Activated CD4-positive, alpha-beta memory T cell treated with anti-CD3 and anti-CD28 coated beads for 36 hours (primary cell): ENCODE measurements at regions of chr16 and their contacts with region 1.

Region 1: DNA sequence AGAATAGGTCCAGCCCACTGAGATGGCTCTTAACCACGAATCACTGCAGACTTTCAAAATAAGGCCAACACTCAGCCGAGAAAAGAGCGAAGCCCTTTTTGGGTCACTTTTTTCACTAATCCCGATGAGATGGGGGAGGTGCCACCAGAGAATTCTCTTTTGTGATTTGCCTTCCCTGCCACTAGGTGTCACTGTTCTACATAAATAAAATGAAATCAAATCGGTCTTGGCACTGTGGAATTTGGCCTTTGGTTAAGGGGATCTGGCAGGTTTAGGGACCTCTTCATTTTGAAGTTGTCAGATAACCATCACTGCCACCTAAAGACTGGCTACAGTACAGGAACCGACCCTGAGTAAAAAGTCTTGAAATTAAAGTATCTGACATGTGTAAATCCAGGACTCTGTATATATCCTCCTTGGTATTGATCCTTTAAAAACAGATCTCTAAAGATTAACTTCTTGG is 147.0 kb downstream of the HS3ST4 start:
- DNase-seq: peak; percentile 21
- H3K4me3 Mint-ChIP-seq: no peak overlapping the region
- H3K27ac Mint-ChIP-seq: no peak overlapping the region
- H3K4me1 Mint-ChIP-seq: peaks cover 2% of the 10 kb centered on the region
- H3K27me3 Mint-ChIP-seq: peaks cover 16% of the 10 kb centered on the region

Region 2: DNA sequence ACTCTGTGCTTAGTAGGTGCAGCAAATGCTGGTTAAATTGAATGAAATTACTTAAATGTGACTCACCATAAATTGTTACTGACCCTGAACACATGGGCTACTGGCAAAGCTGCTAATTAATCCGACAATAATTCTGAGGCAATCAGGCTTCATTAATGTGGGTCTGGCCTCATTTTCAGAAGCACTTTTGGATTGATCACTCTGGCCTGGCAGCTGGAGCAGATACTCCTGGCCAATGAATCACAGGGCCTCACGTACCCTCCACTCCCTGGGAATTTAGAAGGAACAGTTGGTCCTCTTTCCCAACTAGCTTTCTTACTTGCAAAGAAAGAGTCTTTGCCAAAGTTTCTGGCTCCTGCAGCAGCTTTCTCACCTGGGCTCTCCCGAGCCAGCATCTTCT is 419.1 kb before region 1 on chr16:
- CTCF ChIA-PET with region 1: no interaction called
- POLR2A ChIA-PET with region 1: no interaction called
- intact Hi-C with region 1: no loop called
- DNase-seq: no peak
- H3K4me3 Mint-ChIP-seq: no peak overlapping the region
- H3K27ac Mint-ChIP-seq: no peak overlapping the region
- H3K4me1 Mint-ChIP-seq: no peaks in the 10 kb centered on the region
- H3K27me3 Mint-ChIP-seq: peaks cover 1% of the 10 kb centered on the region

Region 3: GRCh38 chr16:25569011-25569410 is 269.7 kb before region 1 on chr16:
- CTCF ChIA-PET with region 1: no interaction called
- POLR2A ChIA-PET with region 1: no interaction called
- intact Hi-C with region 1: no loop called
- DNase-seq: no peak
- H3K4me3 Mint-ChIP-seq: no peak overlapping the region
- H3K27ac Mint-ChIP-seq: no peak overlapping the region
- H3K4me1 Mint-ChIP-seq: no peaks in the 10 kb centered on the region
- H3K27me3 Mint-ChIP-seq: peaks cover 2% of the 10 kb centered on the region

Region 4: GRCh38 chr16:25679511-25679910 is 159.2 kb before region 1 on chr16:
- CTCF ChIA-PET with region 1: no interaction called
- POLR2A ChIA-PET with region 1: no interaction called
- intact Hi-C with region 1: no loop called
- DNase-seq: no peak
- H3K4me3 Mint-ChIP-seq: no peak overlapping the region
- H3K27ac Mint-ChIP-seq: no peak overlapping the region
- H3K4me1 Mint-ChIP-seq: no peaks in the 10 kb centered on the region
- H3K27me3 Mint-ChIP-seq: no peaks in the 10 kb centered on the region

Region 5: GRCh38 chr16:26542198-26542769 is 703.5 kb after region 1 on chr16:
- CTCF ChIA-PET with region 1: no interaction called
- POLR2A ChIA-PET with region 1: no interaction called
- intact Hi-C with region 1: no loop called
- DNase-seq: no peak
- H3K4me3 Mint-ChIP-seq: no peak overlapping the region
- H3K27ac Mint-ChIP-seq: no peak overlapping the region
- H3K4me1 Mint-ChIP-seq: no peaks in the 10 kb centered on the region
- H3K27me3 Mint-ChIP-seq: peaks cover 5% of the 10 kb centered on the region

Region 6: DNA sequence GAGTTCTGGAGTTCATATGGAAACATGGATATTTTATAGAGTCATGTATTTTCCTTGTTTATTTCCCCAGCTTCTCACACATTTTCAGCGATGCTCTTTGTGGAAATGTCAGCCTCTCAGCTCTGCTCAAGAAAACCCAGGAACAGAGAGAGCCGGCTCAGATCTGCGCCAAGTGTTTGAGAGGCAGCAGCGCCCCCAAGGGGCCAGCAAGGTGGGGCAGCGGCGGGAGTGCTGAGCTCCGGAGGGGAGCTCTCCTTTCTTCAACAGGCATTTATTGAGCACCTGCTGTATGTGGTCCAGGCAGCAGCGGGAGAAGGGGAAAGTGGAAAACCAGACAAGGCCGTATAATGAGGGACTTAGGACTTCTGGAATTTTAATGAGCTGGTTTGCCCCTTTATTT is 806.9 kb after region 1 on chr16:
- CTCF ChIA-PET with region 1: interaction called, 10 read pairs
- POLR2A ChIA-PET with region 1: no interaction called
- intact Hi-C with region 1: loop called (anchors 5 kb)
- DNase-seq: peak; percentile 71
- H3K4me3 Mint-ChIP-seq: no peak overlapping the region
- H3K27ac Mint-ChIP-seq: no peak overlapping the region
- H3K4me1 Mint-ChIP-seq: peaks cover 2% of the 10 kb centered on the region
- H3K27me3 Mint-ChIP-seq: peaks cover 6% of the 10 kb centered on the region

Region 7: DNA sequence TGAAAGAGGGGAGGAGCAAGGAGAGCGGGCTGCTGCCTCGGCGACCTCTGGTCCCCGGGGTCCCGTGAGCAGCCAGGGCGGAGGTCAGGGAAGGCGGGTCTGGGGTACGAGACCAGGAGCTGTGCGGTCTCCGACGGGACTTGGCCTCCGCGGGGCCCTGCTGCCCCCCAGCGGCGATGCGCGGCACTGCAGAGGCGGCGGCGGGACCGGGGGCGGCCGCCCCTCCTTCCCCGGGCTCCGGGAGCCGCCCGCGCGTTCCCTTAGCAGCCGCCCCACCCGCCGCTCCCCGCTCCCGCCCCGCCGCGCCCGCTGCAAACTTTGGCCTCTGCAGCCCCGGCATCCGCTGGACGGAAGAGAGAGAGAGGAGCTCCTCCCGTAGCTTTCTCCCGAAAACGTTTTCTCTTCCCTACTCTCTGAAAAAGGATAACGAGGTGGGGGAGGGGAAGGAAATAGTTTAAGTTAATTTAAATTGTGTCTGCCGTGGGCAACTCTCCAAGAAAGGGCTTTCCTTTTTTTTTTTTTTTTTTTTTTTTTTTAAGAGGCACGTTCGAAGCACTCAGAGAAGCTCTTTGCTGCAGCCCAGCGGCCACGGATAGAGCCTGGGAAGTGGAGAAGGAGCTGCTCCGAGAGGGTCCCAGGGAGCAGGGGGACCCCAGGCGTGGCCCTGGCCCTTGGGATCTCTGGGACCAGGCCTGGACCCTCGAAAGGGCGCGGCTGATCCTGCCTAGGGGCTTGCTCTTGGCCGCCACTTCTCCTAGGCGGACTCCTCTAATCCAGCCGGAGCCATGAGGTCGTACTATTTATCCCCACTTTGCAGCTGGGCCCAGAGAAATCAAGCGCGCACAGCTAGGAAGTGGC is 1271.1 kb after region 1 on chr16:
- CTCF ChIA-PET with region 1: interaction called, 6 read pairs
- POLR2A ChIA-PET with region 1: no interaction called
- intact Hi-C with region 1: loop called (anchors 5 kb)
- DNase-seq: peak; percentile 86
- H3K4me3 Mint-ChIP-seq: peak overlapping the region; percentile 53
- H3K27ac Mint-ChIP-seq: no peak overlapping the region
- H3K4me1 Mint-ChIP-seq: peaks cover 5% of the 10 kb centered on the region
- H3K27me3 Mint-ChIP-seq: no peaks in the 10 kb centered on the region